Activated B cell treated with CpG ODN at 0.5 μM for 24 hours (primary cell): ENCODE measurements at regions of chr10 and their contacts with region 1.

Region 1: GRCh38 chr10:14700546-14701123 is 74.1 kb downstream of the FAM107B start:
- DNase-seq: no peak
- ATAC-seq: no peak
- H3K4me3 Mint-ChIP-seq: no peak overlapping the region
- H3K27ac Mint-ChIP-seq: no peak overlapping the region
- H3K4me1 Mint-ChIP-seq: peaks cover 11% of the 10 kb centered on the region
- H3K27me3 Mint-ChIP-seq: no peaks in the 10 kb centered on the region
- CTCF ChIP-seq: no peak

Region 2: DNA sequence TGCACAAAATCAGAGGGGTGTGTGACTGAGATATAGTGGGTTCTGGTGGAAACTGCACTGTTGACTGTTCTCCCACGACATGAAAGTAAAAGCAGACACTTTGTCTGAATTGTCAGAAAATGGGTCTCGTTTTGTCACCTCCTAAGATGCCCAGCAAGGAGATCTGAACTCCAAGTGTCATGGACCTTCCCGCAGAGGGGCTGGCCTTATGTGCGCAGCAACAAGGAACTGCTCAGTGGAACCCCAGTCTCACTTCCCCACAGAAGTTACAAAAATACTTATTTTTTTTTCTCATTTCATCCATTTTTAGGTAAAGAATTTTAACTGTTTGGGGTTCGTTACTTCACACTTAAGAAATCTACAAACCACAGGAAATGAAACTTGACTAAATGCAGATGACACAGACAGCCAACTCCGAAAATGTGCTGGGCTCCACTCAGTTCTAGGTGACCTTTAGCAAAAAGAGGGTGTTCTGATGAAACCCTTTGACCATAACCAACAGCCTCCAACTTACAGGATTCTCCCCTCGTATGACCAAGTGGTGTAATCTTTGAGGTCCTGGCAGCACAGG is 40.9 kb before region 1 on chr10:
- CTCF ChIA-PET with region 1: no interaction called
- POLR2A ChIA-PET with region 1: interaction called, 7 read pairs
- intact Hi-C with region 1: loop called (anchors 5 kb)
- DNase-seq: no peak
- ATAC-seq: peak; percentile 68
- H3K4me3 Mint-ChIP-seq: peak overlapping the region; percentile 78
- H3K27ac Mint-ChIP-seq: peak overlapping the region; percentile 94
- H3K4me1 Mint-ChIP-seq: peaks cover 85% of the 10 kb centered on the region
- H3K27me3 Mint-ChIP-seq: no peaks in the 10 kb centered on the region
- CTCF ChIP-seq: no peak

Region 3: GRCh38 chr10:14724931-14725330 is 24.3 kb after region 1 on chr10:
- CTCF ChIA-PET with region 1: no interaction called
- POLR2A ChIA-PET with region 1: interaction called, 8 read pairs
- intact Hi-C with region 1: loop called (anchors 2 kb)
- DNase-seq: no peak
- ATAC-seq: no peak
- H3K4me3 Mint-ChIP-seq: no peak overlapping the region
- H3K27ac Mint-ChIP-seq: no peak overlapping the region
- H3K4me1 Mint-ChIP-seq: peaks cover 49% of the 10 kb centered on the region
- H3K27me3 Mint-ChIP-seq: no peaks in the 10 kb centered on the region
- CTCF ChIP-seq: no peak